Activated CD4-positive, alpha-beta T cell treated with anti-CD3 and anti-CD28 coated beads for 36 hours (primary cell): ENCODE measurements at regions of chr3 and their contacts with region 1.

Region 1: DNA sequence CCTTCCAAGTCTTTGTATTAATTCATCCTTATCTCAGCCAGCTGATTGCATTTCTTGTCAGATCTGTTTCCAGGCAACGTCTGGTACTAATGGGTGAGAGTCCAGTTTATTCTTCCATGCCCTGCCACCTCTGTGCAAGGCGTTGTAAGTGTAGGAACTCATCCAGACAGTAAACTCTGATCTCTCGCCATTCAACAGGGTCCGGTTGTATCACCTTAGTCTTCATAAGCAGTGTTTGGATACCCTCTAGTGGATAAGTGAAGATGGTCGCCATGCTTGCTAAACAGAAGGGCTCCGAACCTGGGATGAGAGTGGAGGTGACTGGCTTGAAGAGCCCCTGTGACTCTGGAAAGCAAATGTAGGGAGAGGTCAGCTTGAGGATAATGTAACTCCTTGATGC is 51.6 kb upstream of the CMTM7 start:
- DNase-seq: peak; percentile 35
- ATAC-seq: peak; percentile 66
- H3K4me3 Mint-ChIP-seq: no peak overlapping the region
- H3K27ac Mint-ChIP-seq: no peak overlapping the region
- H3K4me1 Mint-ChIP-seq: peaks cover 23% of the 10 kb centered on the region
- H3K27me3 Mint-ChIP-seq: no peaks in the 10 kb centered on the region

Region 2: DNA sequence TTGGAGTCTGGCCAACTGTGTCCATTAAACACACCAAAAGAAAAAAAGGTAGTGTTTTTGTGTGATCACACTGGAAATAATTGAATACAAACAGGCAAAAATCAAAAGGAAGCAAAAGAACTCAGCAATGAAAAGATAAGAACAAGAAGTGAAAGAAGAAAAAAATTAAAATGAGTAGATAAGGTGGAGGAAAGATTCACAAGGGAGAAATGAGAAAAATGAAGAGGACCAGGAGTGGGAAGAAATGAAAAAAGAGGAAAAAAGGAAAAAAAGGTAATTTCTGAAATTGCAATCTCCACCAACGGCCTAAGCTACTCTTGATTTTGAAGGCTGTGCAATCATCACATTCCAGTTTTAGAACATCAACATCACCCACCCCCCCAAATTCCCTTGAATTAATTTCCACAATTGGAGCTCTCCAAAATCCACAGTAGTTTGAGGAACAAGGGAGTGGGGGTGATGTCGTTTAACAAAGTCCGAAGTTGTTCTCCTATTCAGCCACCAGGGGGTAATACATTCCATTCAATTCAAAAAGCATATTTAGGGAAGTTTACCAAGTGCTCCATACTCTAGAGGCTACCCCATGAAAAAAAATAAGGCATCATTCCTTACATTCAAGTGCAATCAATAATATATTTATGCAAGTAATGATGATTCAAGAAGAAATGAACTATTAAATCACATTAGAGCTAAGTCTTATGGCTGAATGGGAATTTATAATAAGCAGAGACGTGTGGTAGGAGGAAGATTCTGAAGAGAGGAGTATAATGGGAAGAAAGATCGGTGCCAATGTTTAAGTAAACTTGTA is 321.1 kb before region 1 on chr3:
- CTCF ChIA-PET with region 1: no interaction called
- POLR2A ChIA-PET with region 1: no interaction called
- intact Hi-C with region 1: loop called (anchors 1 to 10 kb)
- DNase-seq: no peak
- ATAC-seq: no peak
- H3K4me3 Mint-ChIP-seq: no peak overlapping the region
- H3K27ac Mint-ChIP-seq: no peak overlapping the region
- H3K4me1 Mint-ChIP-seq: no peaks in the 10 kb centered on the region
- H3K27me3 Mint-ChIP-seq: no peaks in the 10 kb centered on the region